ENCODE measurements at regions of chr4 and their contacts with region 1.

Region 1: DNA sequence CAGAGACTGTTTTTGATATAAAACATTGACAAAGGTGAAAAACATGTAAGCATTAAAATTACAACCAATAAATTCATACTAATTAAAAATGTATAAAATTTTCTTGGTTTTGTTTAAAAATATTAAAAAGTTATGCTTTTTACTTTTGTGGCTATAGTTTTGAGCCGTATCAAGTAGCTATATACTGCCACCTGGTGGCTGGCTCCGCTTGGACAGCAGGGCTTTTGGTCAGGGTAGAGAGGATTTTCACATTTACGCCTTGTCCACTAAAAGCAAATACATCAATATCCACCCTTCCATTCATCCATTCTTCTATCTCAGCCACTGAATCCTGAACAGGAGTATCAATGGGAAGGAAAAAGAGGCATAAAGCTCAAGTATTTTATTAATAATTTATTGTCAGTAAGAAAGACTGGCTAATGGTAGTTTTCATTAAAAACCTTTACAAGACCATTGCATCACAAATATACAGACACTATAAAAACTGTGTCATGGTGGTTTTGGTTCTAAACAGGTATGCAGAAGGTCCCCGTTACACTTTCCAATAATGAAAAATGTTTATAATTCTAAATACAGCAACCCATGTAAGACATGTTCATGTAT is 32.1 kb upstream of the MTNR1A start:
- DNase-seq: peak; percentile 75 to 91 (median 81)
- ATAC-seq: peak; percentile 51 to 74
- H3K4me3 ChIP-seq: no peak overlapping the region
- H3K27ac ChIP-seq: no peak overlapping the region
- H3K4me1 ChIP-seq: no peaks in the 10 kb centered on the region
- H3K27me3 ChIP-seq: no peaks in the 10 kb centered on the region

Region 2: DNA sequence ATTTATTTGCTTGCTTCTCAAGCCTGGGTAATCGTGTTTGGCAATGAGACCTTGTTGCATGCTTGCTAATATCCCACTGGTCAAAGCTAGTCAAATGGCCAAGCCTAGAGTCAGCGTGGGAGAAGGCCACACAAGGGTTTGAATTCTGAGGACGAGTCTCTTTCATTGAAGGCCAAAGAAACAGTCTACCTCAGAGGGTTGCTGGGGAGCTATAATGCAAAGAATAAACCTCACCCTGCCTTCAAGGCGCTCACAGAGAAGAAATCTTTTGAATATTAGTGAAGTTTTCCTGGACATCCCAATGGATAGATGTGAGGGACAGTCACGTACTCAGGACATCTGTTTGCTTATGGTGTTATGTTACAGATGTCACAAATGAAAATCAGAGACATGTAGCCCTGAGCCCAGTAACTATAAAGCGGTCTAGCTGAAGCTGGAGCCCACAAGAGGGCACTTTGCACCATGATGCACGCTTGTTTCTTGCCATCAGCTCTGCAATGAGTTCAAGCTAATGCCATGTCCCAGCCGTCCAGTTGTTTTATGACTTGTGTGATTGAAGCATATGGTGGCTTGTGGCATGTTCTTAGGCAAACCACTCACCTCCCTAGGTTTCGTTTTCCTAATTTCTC is 519.6 kb before region 1 on chr4:
- intact Hi-C with region 1: loop called in 1 of 4 experiments (anchors 5 kb)
- DNase-seq: peak; percentile 57 to 78 (median 69)
- ATAC-seq: peak; percentile 94 to 95
- H3K4me3 ChIP-seq: peak overlapping the region; percentile 99
- H3K27ac ChIP-seq: peak overlapping the region; percentile 23
- H3K4me1 ChIP-seq: no peaks in the 10 kb centered on the region
- H3K27me3 ChIP-seq: no peaks in the 10 kb centered on the region

Region 3: GRCh38 chr4:186297013-186297645 is 290.4 kb before region 1 on chr4:
- intact Hi-C with region 1: loop called (anchors 5 to 10 kb)
- DNase-seq: no peak
- ATAC-seq: no peak
- H3K4me3 ChIP-seq: no peak overlapping the region
- H3K27ac ChIP-seq: no peak overlapping the region
- H3K4me1 ChIP-seq: no peaks in the 10 kb centered on the region
- H3K27me3 ChIP-seq: peaks cover 2% of the 10 kb centered on the region

Region 4: DNA sequence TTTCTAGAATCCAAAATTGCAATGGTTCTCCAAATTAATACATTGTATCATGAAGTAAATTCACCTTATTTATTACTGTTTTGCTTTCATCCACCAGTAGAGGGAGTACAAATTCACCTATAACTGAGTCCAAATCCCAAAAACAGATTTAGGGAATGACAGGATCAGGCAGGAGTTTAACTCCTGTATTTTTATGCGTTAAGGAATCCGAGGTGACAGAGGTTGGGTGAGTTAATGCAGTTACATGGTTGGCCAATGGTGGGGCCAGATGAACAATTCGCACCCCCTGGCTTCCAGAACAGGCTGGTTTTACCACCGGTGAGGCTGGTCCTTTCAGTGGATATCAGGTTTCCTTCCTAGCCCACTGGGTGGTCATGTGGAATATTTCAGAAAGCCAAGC is 114.6 kb before region 1 on chr4:
- intact Hi-C with region 1: loop called in 2 of 4 experiments (anchors 5 kb)
- DNase-seq: no peak
- ATAC-seq: no peak
- H3K4me3 ChIP-seq: no peak overlapping the region
- H3K27ac ChIP-seq: no peak overlapping the region
- H3K4me1 ChIP-seq: no peaks in the 10 kb centered on the region
- H3K27me3 ChIP-seq: no peaks in the 10 kb centered on the region